CD8-positive, alpha-beta memory T cell (primary cell): ENCODE measurements at regions of chr20 and their contacts with region 1.

Region 1: GRCh38 chr20:53643031-53643832 is 49.6 kb upstream of the ZNF217 start:
- DNase-seq: peak; percentile 33 to 78 (median 68)
- H3K4me3 ChIP-seq: peak overlapping the region; percentile 14
- H3K4me3 Mint-ChIP-seq: peak overlapping the region; percentile 78 to 94 (median 85)
- H3K27ac ChIP-seq: peak overlapping the region; percentile 73
- H3K27ac Mint-ChIP-seq: peak overlapping the region; percentile 93 to 99 (median 97)
- H3K4me1 ChIP-seq: peaks cover 34% of the 10 kb centered on the region
- H3K4me1 Mint-ChIP-seq: peaks cover 29 to 46% (median 42%) of the 10 kb centered on the region in 3 donors
- H3K27me3 ChIP-seq: no peaks in the 10 kb centered on the region
- H3K27me3 Mint-ChIP-seq: no peaks in the 10 kb centered on the region

Region 2: GRCh38 chr20:53594068-53595017 is 48.9 kb before region 1 on chr20:
- CTCF ChIA-PET with region 1: interaction called, 7 read pairs
- POLR2A ChIA-PET with region 1: interaction called, 15 read pairs
- DNase-seq: peak; percentile 95 to 99 (median 96)
- H3K4me3 ChIP-seq: peak overlapping the region; percentile 63
- H3K4me3 Mint-ChIP-seq: peak overlapping the region; percentile 83 to 99 (median 98)
- H3K27ac ChIP-seq: peak overlapping the region; percentile 80
- H3K27ac Mint-ChIP-seq: peak overlapping the region; percentile 90 to 96 (median 93)
- H3K4me1 ChIP-seq: peaks cover 34% of the 10 kb centered on the region
- H3K4me1 Mint-ChIP-seq: peaks cover 49 to 71% (median 66%) of the 10 kb centered on the region in 3 donors
- H3K27me3 ChIP-seq: no peaks in the 10 kb centered on the region
- H3K27me3 Mint-ChIP-seq: peaks cover 0 to 4% of the 10 kb centered on the region in 2 donors

Region 3: GRCh38 chr20:53677447-53678314 is 34.4 kb after region 1 on chr20:
- CTCF ChIA-PET with region 1: no interaction called
- POLR2A ChIA-PET with region 1: no interaction called
- DNase-seq: peak in 1 of 5 donors; percentile 37
- H3K4me3 ChIP-seq: peak overlapping the region; percentile 16
- H3K4me3 Mint-ChIP-seq: peak overlapping the region in 1 of 7 donors; percentile 23
- H3K27ac ChIP-seq: peak overlapping the region; percentile 25
- H3K27ac Mint-ChIP-seq: peak overlapping the region in 4 of 8 donors; percentile 28 to 80 (median 45)
- H3K4me1 ChIP-seq: peaks cover 26% of the 10 kb centered on the region
- H3K4me1 Mint-ChIP-seq: peaks cover 6 to 12% (median 11%) of the 10 kb centered on the region in 3 donors
- H3K27me3 ChIP-seq: no peaks in the 10 kb centered on the region
- H3K27me3 Mint-ChIP-seq: peaks cover 0 to 3% of the 10 kb centered on the region in 2 donors